ENCODE measurements at regions of chr4 and their contacts with region 1.

Region 1: GRCh38 chr4:119977076-119977940 is 89.3 kb downstream of the MAD2L1 start:
- DNase-seq: no peak
- ATAC-seq: no peak
- H3K4me3 ChIP-seq: no peak overlapping the region
- H3K27ac ChIP-seq: no peak overlapping the region
- H3K4me1 ChIP-seq: no peaks in the 10 kb centered on the region
- H3K27me3 ChIP-seq: no peaks in the 10 kb centered on the region
- CTCF ChIP-seq: no peak
- EP300 ChIP-seq: no peak
- POLR2A ChIP-seq: no peak
- RAD21 ChIP-seq: no peak

Region 2: DNA sequence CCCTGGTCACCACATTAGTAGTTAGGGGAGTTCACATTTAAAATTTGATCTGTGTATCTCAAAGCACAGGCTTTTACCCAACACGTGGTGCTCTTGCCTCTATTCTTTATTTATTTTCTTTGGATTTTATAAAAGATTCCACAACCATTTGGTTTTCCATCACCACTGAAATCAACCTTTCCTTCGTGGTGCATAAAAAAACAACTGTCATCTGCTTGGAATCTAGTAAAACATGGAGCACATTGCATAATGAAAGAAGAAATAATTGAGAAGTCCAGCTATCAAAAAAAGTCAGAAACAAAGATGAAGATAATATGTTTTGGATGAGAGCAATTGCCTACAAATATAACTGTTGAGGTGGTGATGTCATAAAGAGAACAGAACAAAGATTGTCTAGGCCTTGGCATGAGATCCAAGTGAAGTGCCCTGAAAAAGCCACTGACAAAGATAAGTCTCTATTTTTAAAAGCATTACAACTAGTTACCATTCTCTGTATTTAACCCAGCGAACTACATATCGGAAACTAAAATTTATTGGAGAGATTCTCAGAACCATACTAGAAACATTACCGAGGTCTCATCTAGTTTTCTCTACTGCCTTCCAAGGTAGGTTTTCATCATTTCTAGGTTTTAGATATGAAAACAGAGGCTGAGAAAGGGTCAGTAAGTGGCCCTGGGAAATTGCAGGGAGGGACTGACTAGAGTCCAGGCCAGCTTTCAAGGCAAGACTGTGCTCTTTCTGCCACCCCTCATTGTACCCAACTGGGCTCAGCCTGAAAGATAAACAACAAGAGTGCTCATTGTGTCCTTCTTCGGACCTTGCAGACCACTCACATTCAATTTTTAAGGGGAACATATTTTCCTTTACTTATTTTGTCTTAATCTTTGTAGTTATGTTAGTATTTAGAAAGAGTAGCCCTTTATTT is 38.0 kb before region 1 on chr4:
- CTCF ChIA-PET with region 1: no interaction called
- POLR2A ChIA-PET with region 1: no interaction called
- in situ Hi-C with region 1: no loop called
- intact Hi-C with region 1: no loop called
- DNase-seq: no peak
- ATAC-seq: no peak
- H3K4me3 ChIP-seq: no peak overlapping the region
- H3K27ac ChIP-seq: no peak overlapping the region
- H3K4me1 ChIP-seq: no peaks in the 10 kb centered on the region; the same call in 1 of the 2 replicates
- H3K27me3 ChIP-seq: no peaks in the 10 kb centered on the region; a peak in 1 of 5 replicates
- CTCF ChIP-seq: no peak
- EP300 ChIP-seq: no peak
- POLR2A ChIP-seq: no peak
- RAD21 ChIP-seq: no peak

Region 3: GRCh38 chr4:119962631-119963030 is 14.7 kb before region 1 on chr4:
- CTCF ChIA-PET with region 1: no interaction called
- POLR2A ChIA-PET with region 1: no interaction called
- in situ Hi-C with region 1: no loop called
- intact Hi-C with region 1: no loop called
- DNase-seq: no peak
- ATAC-seq: no peak
- H3K4me3 ChIP-seq: no peak overlapping the region
- H3K27ac ChIP-seq: no peak overlapping the region
- H3K4me1 ChIP-seq: no peaks in the 10 kb centered on the region
- H3K27me3 ChIP-seq: no peaks in the 10 kb centered on the region
- CTCF ChIP-seq: no peak
- EP300 ChIP-seq: no peak
- POLR2A ChIP-seq: no peak
- RAD21 ChIP-seq: no peak

Region 4: GRCh38 chr4:120796271-120796670 is 819.0 kb after region 1 on chr4:
- CTCF ChIA-PET with region 1: no interaction called
- POLR2A ChIA-PET with region 1: no interaction called
- in situ Hi-C with region 1: no loop called
- intact Hi-C with region 1: loop called (anchors 10 kb)
- DNase-seq: no peak
- ATAC-seq: no peak
- H3K4me3 ChIP-seq: no peak overlapping the region
- H3K27ac ChIP-seq: no peak overlapping the region
- H3K4me1 ChIP-seq: no peaks in the 10 kb centered on the region
- H3K27me3 ChIP-seq: no peaks in the 10 kb centered on the region; a peak in 1 of 5 replicates
- CTCF ChIP-seq: no peak
- EP300 ChIP-seq: no peak
- POLR2A ChIP-seq: no peak
- RAD21 ChIP-seq: no peak